Posterior vena cava (tissue), 2 donors: ENCODE measurements at regions of chr16 and their contacts with region 1.

Region 1: DNA sequence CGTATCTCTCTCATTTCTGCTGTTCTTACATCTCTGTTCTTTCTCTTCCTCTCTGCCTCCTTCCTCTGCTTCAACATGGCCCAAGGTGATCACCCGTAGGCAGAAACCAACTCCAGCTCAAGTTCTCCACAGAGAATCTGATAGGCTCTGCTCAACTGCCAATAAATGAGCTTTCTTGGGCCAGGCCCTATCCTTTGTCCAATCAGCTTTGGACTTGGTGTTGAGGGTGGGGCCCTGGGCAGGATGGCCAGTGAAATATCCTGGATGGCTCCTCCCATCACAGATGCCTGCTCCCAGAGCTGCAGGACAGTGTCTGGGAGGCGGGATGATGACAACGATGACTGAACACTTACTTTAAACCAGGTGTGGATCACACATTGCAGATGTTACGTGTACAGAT is 17.4 kb upstream of the BRD7 start:
- DNase-seq: no peak

Region 2: GRCh38 chr16:50354629-50355456 is 31.3 kb before region 1 on chr16:
- intact Hi-C with region 1: no loop called
- DNase-seq: no peak

Region 3: GRCh38 chr16:50719518-50720337 is 333.6 kb after region 1 on chr16:
- intact Hi-C with region 1: loop called in 1 of 2 experiments (anchors 5 kb)
- DNase-seq: no peak